ENCODE measurements at regions of chr3 and their contacts with region 1.

Region 1: GRCh38 chr3:16290007-16290826 is 25.2 kb downstream of the OXNAD1 start:
- DNase-seq: no peak
- H3K4me3 ChIP-seq: no peak overlapping the region
- H3K27ac ChIP-seq: no peak overlapping the region
- H3K4me1 ChIP-seq: no peaks in the 10 kb centered on the region
- H3K27me3 ChIP-seq: no peaks in the 10 kb centered on the region
- CTCF ChIP-seq: peak in 2 of 3 experiments; percentile 70 to 73; a peak in 3 of 4 replicates
- EP300 ChIP-seq: no peak
- POLR2A ChIP-seq: no peak
- RAD21 ChIP-seq: peak; percentile 89 to 92

Region 2: GRCh38 chr3:16264708-16265454 is 25.3 kb before region 1 on chr3 and contains the starts of genes DPH3 and OXNAD1:
- CTCF ChIA-PET with region 1: interaction called, 15 read pairs
- POLR2A ChIA-PET with region 1: interaction called, 3 read pairs
- DNase-seq: peak; percentile 96 to 100
- H3K4me3 ChIP-seq: peak within 1 kb of the TSS; percentile 87 to 99 (median 96)
- H3K27ac ChIP-seq: peak within 1 kb of the TSS; percentile 96
- H3K4me1 ChIP-seq: peaks cover 0 to 8% (median 1%) of the 10 kb centered on the region in 4 experiments; a peak in 4 of 7 replicates
- H3K27me3 ChIP-seq: no peaks in the 10 kb centered on the region
- CTCF ChIP-seq: peak in 1 of 3 experiments; percentile 9; a peak in 1 of 4 replicates
- EP300 ChIP-seq: 0 out of 3 replicates have a peak, but pooled peaks of 1 of the 2 experiments have one; percentile 42
- POLR2A ChIP-seq: peak; percentile 92 to 97
- RAD21 ChIP-seq: no peak
- total RNA-seq, gene DPH3: 33.0 and 40.1 TPM in 2 replicates
- total RNA-seq, gene OXNAD1: 24.8 and 25.2 TPM in 2 replicates

Region 3: DNA sequence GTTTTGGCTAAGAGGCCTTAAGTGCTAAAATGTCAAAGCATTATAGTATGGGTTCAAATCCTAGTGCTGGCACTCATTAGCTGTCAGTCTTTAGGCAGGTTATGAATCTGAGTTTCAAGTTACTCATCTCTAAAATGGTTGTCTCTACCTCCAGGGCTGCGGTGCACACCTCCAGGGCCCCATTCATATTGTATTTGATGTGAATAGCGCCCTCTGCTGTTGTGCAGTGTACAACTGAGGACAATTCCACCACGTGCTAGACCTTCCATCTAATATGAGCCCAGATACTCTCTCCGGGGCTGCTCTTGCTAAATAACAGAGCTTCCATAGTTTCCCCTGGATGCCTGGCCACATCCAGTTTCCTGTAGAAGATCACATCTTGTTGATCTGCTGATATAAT is 29.1 kb after region 1 on chr3:
- CTCF ChIA-PET with region 1: interaction called, 106 read pairs
- POLR2A ChIA-PET with region 1: no interaction called
- DNase-seq: no peak
- H3K4me3 ChIP-seq: no peak overlapping the region
- H3K27ac ChIP-seq: no peak overlapping the region
- H3K4me1 ChIP-seq: no peaks in the 10 kb centered on the region
- H3K27me3 ChIP-seq: no peaks in the 10 kb centered on the region
- CTCF ChIP-seq: peak; percentile 44 to 73 (median 62)
- EP300 ChIP-seq: no peak
- POLR2A ChIP-seq: no peak
- RAD21 ChIP-seq: peak; percentile 58 to 67

Region 4: GRCh38 chr3:16410659-16411058 is 120.4 kb after region 1 on chr3:
- CTCF ChIA-PET with region 1: no interaction called
- POLR2A ChIA-PET with region 1: no interaction called
- DNase-seq: no peak
- H3K4me3 ChIP-seq: no peak overlapping the region
- H3K27ac ChIP-seq: no peak overlapping the region
- H3K4me1 ChIP-seq: no peaks in the 10 kb centered on the region
- H3K27me3 ChIP-seq: no peaks in the 10 kb centered on the region; a peak in 1 of 7 replicates
- CTCF ChIP-seq: no peak
- EP300 ChIP-seq: no peak
- POLR2A ChIP-seq: no peak
- RAD21 ChIP-seq: no peak

Region 5: DNA sequence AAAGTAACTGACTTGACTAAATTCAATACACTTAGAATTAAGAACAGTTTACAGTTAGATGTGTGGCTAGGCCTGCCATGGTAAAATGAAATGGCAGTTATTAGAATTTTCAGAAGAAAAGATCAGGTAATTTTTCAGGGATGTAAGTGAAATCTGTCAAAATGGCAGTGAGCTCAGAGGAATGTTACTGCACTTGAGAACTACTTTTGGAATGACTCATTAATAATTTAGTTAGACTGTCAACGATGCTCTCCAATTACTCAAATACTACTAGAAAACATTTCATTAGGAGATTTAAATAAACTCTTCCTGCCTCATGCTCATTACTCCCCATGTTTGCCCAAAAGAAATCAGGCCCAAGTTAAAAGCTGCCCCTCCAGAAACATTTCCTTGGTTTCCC is 138.9 kb after region 1 on chr3:
- CTCF ChIA-PET with region 1: no interaction called
- POLR2A ChIA-PET with region 1: no interaction called
- DNase-seq: no peak
- H3K4me3 ChIP-seq: no peak overlapping the region
- H3K27ac ChIP-seq: no peak overlapping the region
- H3K4me1 ChIP-seq: peaks cover 0 to 2% (median 0%) of the 10 kb centered on the region in 4 experiments; a peak in 2 of 7 replicates
- H3K27me3 ChIP-seq: no peaks in the 10 kb centered on the region
- CTCF ChIP-seq: no peak
- EP300 ChIP-seq: no peak
- POLR2A ChIP-seq: no peak
- RAD21 ChIP-seq: no peak

Region 6: GRCh38 chr3:16511681-16512434 is 221.6 kb after region 1 on chr3:
- CTCF ChIA-PET with region 1: interaction called, 24 read pairs
- POLR2A ChIA-PET with region 1: no interaction called
- DNase-seq: no peak
- H3K4me3 ChIP-seq: peak overlapping the region in 2 of 4 experiments; percentile 60 to 84; a peak in 4 of 8 replicates
- H3K27ac ChIP-seq: no peak overlapping the region
- H3K4me1 ChIP-seq: peaks cover 4 to 23% (median 7%) of the 10 kb centered on the region in 4 experiments
- H3K27me3 ChIP-seq: peaks cover 15 to 33% (median 31%) of the 10 kb centered on the region in 4 experiments
- CTCF ChIP-seq: peak in 1 of 3 experiments; percentile 8; a peak in 1 of 4 replicates
- EP300 ChIP-seq: no peak
- POLR2A ChIP-seq: no peak
- RAD21 ChIP-seq: peak; percentile 34 to 57

Region 7: DNA sequence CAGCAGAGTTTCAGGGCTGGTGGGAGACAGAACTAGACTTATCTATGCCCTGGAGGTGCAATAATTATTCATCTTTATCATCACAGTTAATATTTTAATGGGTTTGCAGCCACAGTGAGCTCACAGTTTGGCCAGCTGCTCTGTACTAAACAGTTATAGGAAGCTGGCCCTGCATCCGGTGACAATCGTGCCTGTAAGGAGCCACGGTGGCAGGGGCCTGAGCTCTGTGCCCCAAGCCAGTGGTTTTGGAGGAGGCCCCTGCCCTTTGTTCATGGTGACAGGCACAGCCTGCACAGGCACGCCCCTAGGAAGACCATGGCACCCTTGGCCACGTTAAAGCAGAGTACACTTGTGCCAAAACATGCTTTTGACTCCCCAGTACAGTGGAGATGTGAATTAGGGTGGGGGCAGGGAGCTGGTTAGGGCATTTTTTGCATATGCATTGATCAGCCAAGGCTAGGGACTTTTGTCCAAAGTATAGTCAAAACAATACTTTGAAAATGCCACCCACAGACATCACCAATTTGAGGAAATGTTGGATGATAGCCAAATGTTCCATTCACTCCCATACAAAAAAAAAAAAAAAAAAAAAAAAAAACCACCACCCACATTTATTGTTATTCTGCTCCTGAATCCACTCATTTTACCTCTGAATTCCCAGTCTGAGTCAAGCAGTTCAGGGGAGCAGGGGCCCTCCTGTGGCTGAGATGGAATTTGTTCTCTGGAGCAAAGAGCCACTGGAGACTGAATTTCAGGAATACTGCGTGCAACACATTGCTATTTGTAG is 226.7 kb after region 1 on chr3:
- CTCF ChIA-PET with region 1: interaction called, 24 read pairs
- POLR2A ChIA-PET with region 1: no interaction called
- DNase-seq: no peak
- H3K4me3 ChIP-seq: no peak overlapping the region
- H3K27ac ChIP-seq: no peak overlapping the region
- H3K4me1 ChIP-seq: peaks cover 3 to 16% (median 5%) of the 10 kb centered on the region in 4 experiments
- H3K27me3 ChIP-seq: peaks cover 13 to 29% (median 27%) of the 10 kb centered on the region in 4 experiments
- CTCF ChIP-seq: peak; percentile 47 to 70 (median 61)
- EP300 ChIP-seq: no peak
- POLR2A ChIP-seq: no peak
- RAD21 ChIP-seq: peak; percentile 76 to 86

Region 8: DNA sequence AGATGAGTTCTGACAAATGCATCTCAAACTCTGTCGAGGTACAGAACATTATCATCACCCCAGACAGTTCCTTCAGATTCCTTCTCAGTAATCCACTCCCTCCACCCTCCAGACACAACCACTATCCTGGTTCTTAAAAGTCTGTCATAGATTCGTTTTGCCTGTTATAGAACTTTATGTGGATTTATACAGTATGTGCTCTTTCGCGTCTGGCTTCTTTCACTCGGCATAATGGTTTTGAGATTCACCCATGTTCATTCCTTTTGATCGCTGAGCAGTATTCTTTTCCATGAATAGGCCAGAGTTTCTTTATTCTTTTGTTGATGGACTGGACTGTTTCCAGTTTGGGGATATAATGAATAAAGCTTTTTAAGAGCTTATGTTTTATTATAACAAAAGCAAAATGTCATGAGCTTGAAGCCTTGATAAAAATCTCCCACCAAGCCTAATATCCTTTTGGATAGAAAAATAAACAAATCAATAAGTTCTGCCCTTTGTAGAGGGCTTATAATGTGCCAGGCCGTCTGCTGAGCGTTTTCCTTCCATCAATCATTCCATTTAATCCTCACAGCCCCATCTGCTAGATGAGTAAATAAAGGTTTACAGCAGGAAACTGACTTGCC is 244.5 kb after region 1 on chr3:
- CTCF ChIA-PET with region 1: interaction called, 12 read pairs
- POLR2A ChIA-PET with region 1: no interaction called
- DNase-seq: no peak
- H3K4me3 ChIP-seq: no peak overlapping the region
- H3K27ac ChIP-seq: no peak overlapping the region
- H3K4me1 ChIP-seq: peaks cover 0 to 14% (median 5%) of the 10 kb centered on the region in 4 experiments; a peak in 4 of 7 replicates
- H3K27me3 ChIP-seq: no peaks in the 10 kb centered on the region
- CTCF ChIP-seq: no peak
- EP300 ChIP-seq: no peak
- POLR2A ChIP-seq: no peak
- RAD21 ChIP-seq: no peak

Region 9: DNA sequence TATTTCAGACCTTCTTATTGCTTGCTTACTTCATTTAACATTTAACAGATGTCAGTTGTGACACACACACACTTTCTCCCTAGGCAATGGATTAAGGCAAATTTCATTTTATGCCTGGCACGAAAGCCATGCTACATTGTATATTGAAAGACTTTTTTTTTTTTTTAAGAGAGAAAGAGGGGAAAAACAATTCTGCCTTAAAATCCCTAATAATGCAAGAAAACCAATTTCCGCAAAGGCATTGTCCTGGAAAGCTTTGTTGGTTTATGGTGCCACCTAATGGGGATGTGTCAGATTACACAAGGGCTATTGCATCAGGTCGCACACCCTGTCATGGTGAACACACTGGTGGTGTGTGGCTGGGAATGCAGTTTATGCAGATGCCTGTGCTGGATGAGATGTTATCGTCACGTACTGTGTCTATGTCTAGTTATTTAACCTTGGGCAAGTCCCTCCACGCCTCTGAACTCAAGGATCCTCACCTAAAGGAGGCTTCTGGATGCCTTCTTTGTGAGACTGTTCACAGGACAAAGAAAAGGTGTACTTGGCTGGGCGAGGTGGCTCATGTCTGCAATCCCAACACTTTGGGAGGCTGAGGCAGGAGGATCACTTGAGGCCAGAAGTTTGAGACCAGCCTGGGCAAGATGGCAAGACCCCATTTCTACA is 260.6 kb after region 1 on chr3:
- CTCF ChIA-PET with region 1: interaction called, 30 read pairs
- POLR2A ChIA-PET with region 1: interaction called, 7 read pairs
- DNase-seq: peak; percentile 36 to 87
- H3K4me3 ChIP-seq: peak overlapping the region in 1 of 4 experiments; percentile 27; a peak in 2 of 8 replicates
- H3K27ac ChIP-seq: no peak overlapping the region
- H3K4me1 ChIP-seq: peaks cover 0 to 4% (median 2%) of the 10 kb centered on the region in 4 experiments; a peak in 4 of 7 replicates
- H3K27me3 ChIP-seq: no peaks in the 10 kb centered on the region
- CTCF ChIP-seq: peak; percentile 73 to 94 (median 90)
- EP300 ChIP-seq: 0 out of 3 replicates have a peak, but pooled peaks of 1 of the 2 experiments have one; percentile 13
- POLR2A ChIP-seq: peak in 1 of 2 experiments; percentile 47; a peak in 1 of 3 replicates
- RAD21 ChIP-seq: peak; percentile 98 to 99

Measured in H1 (cell line).